ENCODE measurements at regions of chr5 and their contacts with region 1.

Region 1: DNA sequence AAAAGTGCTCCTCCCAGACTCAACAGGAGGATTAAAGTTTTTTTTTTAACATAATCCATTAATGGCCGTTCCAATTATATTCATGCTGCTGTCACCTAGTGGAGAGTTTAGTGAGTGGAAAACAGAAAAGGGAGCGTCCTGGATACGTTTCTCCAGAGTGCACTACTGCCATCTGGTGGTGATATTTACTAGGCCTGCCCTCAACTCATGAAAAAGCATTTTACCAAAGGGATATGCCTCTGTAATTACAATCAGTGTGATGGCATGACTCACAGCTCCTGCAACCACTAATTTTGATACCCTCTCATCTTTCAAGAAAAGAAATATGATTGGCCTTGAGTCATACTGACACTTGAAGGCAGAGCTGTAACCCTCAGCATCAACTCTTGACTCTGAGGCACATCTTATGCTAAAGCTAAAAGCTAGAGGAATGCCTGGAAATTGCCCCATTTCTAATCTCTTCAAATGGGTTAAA is 20.0 kb downstream of the MINAR2 start:
- DNase-seq: peak; percentile 38
- H3K4me3 Mint-ChIP-seq: no peak overlapping the region
- H3K27ac Mint-ChIP-seq: no peak overlapping the region
- H3K4me1 Mint-ChIP-seq: no peaks in the 10 kb centered on the region
- H3K27me3 Mint-ChIP-seq: no peaks in the 10 kb centered on the region

Region 2: GRCh38 chr5:128905571-128906110 is 862.3 kb before region 1 on chr5:
- intact Hi-C with region 1: loop called (anchors 1 kb)
- DNase-seq: no peak
- H3K4me3 Mint-ChIP-seq: no peak overlapping the region
- H3K27ac Mint-ChIP-seq: no peak overlapping the region
- H3K4me1 Mint-ChIP-seq: no peaks in the 10 kb centered on the region
- H3K27me3 Mint-ChIP-seq: no peaks in the 10 kb centered on the region

Region 3: GRCh38 chr5:129361440-129362025 is 406.4 kb before region 1 on chr5:
- intact Hi-C with region 1: loop called (anchors 5 kb)
- DNase-seq: no peak
- H3K4me3 Mint-ChIP-seq: no peak overlapping the region
- H3K27ac Mint-ChIP-seq: no peak overlapping the region
- H3K4me1 Mint-ChIP-seq: no peaks in the 10 kb centered on the region
- H3K27me3 Mint-ChIP-seq: no peaks in the 10 kb centered on the region

Region 4: DNA sequence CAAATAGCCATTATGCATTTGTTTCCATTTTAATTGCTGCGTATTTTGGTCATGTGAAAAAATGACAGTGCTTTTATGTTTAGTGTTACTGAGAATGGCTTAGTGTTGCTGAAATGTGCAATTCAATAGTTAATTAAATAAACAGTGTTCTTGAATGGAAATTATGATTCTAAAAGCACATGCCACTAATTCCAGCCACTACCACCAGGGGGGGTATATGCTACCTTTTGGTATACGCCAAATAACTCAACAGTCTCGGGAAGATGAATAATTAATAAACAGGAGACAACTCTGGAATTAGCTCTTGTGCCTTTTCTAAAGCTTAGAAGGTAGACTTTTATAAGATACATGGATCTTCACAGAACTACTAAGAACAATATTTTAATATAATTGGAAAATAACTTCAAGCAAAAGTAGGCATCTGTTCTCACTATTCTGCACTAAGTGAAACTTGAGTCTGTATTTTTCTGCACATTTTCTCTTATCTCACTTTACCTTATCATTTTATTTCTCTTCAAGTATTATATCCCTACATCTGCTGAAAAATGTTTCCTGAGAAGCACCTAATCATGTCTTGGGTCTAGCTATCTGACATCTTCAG is 103.5 kb before region 1 on chr5:
- intact Hi-C with region 1: loop called (anchors 1 kb)
- DNase-seq: no peak
- H3K4me3 Mint-ChIP-seq: no peak overlapping the region
- H3K27ac Mint-ChIP-seq: no peak overlapping the region
- H3K4me1 Mint-ChIP-seq: no peaks in the 10 kb centered on the region
- H3K27me3 Mint-ChIP-seq: no peaks in the 10 kb centered on the region

Region 5: GRCh38 chr5:129852747-129853352 is 84.9 kb after region 1 on chr5:
- intact Hi-C with region 1: loop called (anchors 1 kb)
- DNase-seq: peak; percentile 35
- H3K4me3 Mint-ChIP-seq: no peak overlapping the region
- H3K27ac Mint-ChIP-seq: no peak overlapping the region
- H3K4me1 Mint-ChIP-seq: no peaks in the 10 kb centered on the region
- H3K27me3 Mint-ChIP-seq: peaks cover 2% of the 10 kb centered on the region

Region 6: GRCh38 chr5:129899454-129899853 is 131.5 kb after region 1 on chr5:
- intact Hi-C with region 1: no loop called
- DNase-seq: no peak
- H3K4me3 Mint-ChIP-seq: no peak overlapping the region
- H3K27ac Mint-ChIP-seq: no peak overlapping the region
- H3K4me1 Mint-ChIP-seq: peaks cover 6% of the 10 kb centered on the region
- H3K27me3 Mint-ChIP-seq: peaks cover 30% of the 10 kb centered on the region